Left ventricle myocardium superior (tissue), 1 donor: ENCODE measurements at regions of chr4 and their contacts with region 1.

Region 1: GRCh38 chr4:128454281-128455075 is 166.9 kb upstream of the PGRMC2 start:
- DNase-seq: peak; percentile 80
- ATAC-seq: peak; percentile 95

Region 2: GRCh38 chr4:128558896-128559679 is 104.6 kb after region 1 on chr4:
- intact Hi-C with region 1: loop called (anchors 10 kb)
- DNase-seq: no peak
- ATAC-seq: no peak